ENCODE measurements at regions of chr5 and their contacts with region 1.

Region 1: DNA sequence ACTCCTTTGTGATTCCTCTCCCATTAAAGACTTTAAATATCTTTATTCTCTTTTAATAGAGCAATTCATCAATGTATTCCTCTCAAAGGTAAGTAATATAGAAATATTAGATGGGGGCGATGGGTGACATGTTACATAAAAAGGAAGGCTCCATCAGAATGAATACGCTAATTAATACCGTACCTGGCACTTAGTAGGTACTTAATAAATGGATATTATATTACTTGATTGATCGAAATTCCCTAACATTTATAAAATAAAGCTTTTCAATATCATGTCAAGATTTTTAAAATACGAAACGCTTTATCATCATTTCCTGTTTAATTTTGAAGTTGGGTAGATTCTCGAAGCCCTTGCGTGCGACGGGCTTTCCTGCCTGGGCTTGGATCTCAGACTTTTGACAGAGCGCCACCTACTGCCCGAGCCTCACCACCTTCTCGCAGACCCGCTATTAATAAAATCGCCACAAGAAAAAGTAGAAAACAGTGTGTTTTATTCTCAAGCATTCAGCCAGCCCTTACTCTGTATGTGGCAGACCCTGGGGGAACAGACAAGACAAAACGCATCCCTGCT is 99.4 kb downstream of the C5orf15 start:
- DNase-seq: peak; percentile 77
- H3K4me3 ChIP-seq: no peak overlapping the region
- H3K27ac ChIP-seq: no peak overlapping the region
- H3K4me1 ChIP-seq: peaks cover 16 to 28% of the 10 kb centered on the region in 2 experiments; a peak in 3 of 4 replicates
- H3K27me3 ChIP-seq: peaks cover 10% of the 10 kb centered on the region; the same call in 1 of the 2 replicates
- CTCF ChIP-seq: peak; percentile 83
- EP300 ChIP-seq: no peak
- RAD21 ChIP-seq: peak; percentile 90

Region 2: DNA sequence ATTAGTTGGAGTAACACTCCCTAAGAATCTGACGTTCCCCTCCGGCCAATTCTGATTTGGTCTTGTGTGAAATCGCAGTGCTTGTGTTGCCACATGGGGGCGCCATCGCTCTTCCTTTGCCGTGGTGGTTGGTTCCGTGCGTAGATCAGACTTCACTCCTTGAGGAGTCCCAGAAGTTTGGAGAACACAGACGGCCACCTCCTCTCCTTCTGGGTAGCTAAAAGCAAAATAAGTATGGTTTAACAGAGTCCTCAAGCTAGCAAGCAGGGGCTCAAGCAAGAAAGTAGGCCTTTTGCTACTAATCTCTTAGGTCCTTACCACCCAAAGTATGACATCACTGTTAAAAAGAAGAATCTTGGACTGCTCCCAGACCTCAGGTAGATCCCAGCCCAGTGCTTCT is 757.7 kb before region 1 on chr5:
- CTCF ChIA-PET with region 1: interaction called, 10 read pairs
- POLR2A ChIA-PET with region 1: no interaction called
- DNase-seq: peak; percentile 79
- H3K4me3 ChIP-seq: no peak overlapping the region; a peak in 1 of 4 replicates
- H3K27ac ChIP-seq: no peak overlapping the region
- H3K4me1 ChIP-seq: peaks cover 0 to 24% of the 10 kb centered on the region in 2 experiments; a peak in 1 of 4 replicates
- H3K27me3 ChIP-seq: no peaks in the 10 kb centered on the region
- CTCF ChIP-seq: peak; percentile 97
- EP300 ChIP-seq: no peak
- RAD21 ChIP-seq: peak; percentile 99

Region 3: GRCh38 chr5:133605323-133605722 is 263.7 kb before region 1 on chr5:
- CTCF ChIA-PET with region 1: interaction called, 10 read pairs
- POLR2A ChIA-PET with region 1: no interaction called
- DNase-seq: peak; percentile 80
- H3K4me3 ChIP-seq: no peak overlapping the region
- H3K27ac ChIP-seq: peak overlapping the region in 1 of 2 experiments; percentile 68; a peak in 2 of 4 replicates
- H3K4me1 ChIP-seq: peaks cover 0 to 22% of the 10 kb centered on the region in 2 experiments; a peak in 2 of 4 replicates
- H3K27me3 ChIP-seq: peaks cover 4% of the 10 kb centered on the region; the same call in 1 of the 2 replicates
- CTCF ChIP-seq: no peak
- EP300 ChIP-seq: peak in 1 of 2 experiments; percentile 86; a peak in 2 of 4 replicates
- RAD21 ChIP-seq: no peak

Region 4: GRCh38 chr5:133709209-133709725 is 159.8 kb before region 1 on chr5:
- CTCF ChIA-PET with region 1: interaction called, 34 read pairs
- POLR2A ChIA-PET with region 1: interaction called, 4 read pairs
- DNase-seq: no peak
- H3K4me3 ChIP-seq: no peak overlapping the region
- H3K27ac ChIP-seq: peak overlapping the region in 1 of 2 experiments; percentile 93; a peak in 2 of 4 replicates
- H3K4me1 ChIP-seq: peaks cover 0 to 71% of the 10 kb centered on the region in 2 experiments; a peak in 2 of 4 replicates
- H3K27me3 ChIP-seq: no peaks in the 10 kb centered on the region
- CTCF ChIP-seq: no peak
- EP300 ChIP-seq: no peak
- RAD21 ChIP-seq: no peak

Region 5: DNA sequence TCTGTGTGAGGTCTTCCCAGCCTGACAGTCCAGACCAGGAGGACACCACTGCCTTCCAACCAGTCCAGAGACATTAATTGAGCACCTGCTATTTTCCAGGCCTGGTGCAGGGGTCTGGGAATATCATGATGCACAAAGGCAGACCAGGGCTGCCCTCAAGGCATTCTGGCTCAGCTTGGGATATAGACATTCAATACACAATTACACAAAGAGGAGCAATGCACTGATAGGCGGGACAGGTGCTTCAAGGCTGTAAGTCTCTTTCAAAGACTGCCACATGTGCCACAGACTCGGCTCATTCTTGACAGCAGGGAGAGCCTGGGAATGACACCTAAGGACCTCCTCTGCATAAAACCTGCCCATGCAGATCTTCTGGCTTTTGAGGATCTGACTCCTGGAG is 59.2 kb before region 1 on chr5:
- CTCF ChIA-PET with region 1: interaction called, 11 read pairs
- POLR2A ChIA-PET with region 1: no interaction called
- DNase-seq: no peak
- H3K4me3 ChIP-seq: no peak overlapping the region
- H3K27ac ChIP-seq: no peak overlapping the region
- H3K4me1 ChIP-seq: no peaks in the 10 kb centered on the region; a peak in 1 of 4 replicates
- H3K27me3 ChIP-seq: peaks cover 5% of the 10 kb centered on the region; the same call in 1 of the 2 replicates
- CTCF ChIP-seq: no peak
- EP300 ChIP-seq: no peak
- RAD21 ChIP-seq: no peak

Region 6: GRCh38 chr5:133884569-133885311 is 15.7 kb after region 1 on chr5:
- CTCF ChIA-PET with region 1: interaction called, 81 read pairs
- POLR2A ChIA-PET with region 1: no interaction called
- DNase-seq: no peak
- H3K4me3 ChIP-seq: no peak overlapping the region
- H3K27ac ChIP-seq: no peak overlapping the region
- H3K4me1 ChIP-seq: peaks cover 11 to 28% of the 10 kb centered on the region in 2 experiments; a peak in 2 of 4 replicates
- H3K27me3 ChIP-seq: no peaks in the 10 kb centered on the region; the same call in 1 of the 2 replicates
- CTCF ChIP-seq: no peak
- EP300 ChIP-seq: no peak
- RAD21 ChIP-seq: no peak

Region 7: DNA sequence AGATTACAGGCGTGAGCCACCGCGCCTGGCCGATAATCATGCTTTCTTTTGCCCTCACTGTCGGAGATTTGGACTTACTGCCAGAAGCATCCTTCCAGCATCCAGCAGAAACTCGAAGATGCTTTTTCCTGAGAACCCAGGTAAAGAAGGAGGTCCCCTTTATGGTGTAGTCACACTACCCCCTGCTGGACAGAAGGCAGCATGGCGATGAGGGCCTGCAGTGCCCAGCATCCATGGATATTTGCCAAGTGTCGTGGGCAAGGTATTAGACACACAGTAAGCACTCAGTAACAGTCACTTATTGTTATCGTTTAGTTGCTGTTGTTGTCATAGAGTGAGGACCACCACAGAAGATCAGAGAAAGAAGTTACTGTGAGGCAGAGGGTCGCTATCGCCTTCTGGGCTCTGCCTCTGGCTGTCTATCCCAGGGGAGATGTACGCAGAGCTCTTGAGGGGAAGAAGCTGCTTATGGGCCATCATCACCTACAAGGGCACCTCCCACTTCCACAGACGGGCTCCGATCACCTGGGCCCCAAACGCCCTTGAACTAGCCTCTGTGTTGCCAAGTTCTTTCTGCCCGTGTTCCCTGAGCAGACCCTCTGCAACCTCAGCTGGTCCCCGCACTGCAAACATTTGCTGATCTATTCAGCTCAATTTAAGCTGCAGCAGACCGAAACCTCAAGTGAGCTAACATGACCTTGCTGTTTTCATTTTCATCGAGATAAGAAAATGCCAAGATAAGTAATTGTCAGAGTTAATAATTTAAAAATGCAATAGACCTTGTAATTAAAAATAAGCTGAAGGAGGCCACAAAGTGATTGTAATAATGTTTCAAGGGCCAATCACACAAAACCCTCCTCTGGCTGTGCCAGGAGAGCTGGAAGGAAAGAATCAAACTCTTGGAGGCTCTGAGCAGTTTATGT is 75.5 kb after region 1 on chr5:
- CTCF ChIA-PET with region 1: interaction called, 12 read pairs
- POLR2A ChIA-PET with region 1: no interaction called
- DNase-seq: peak; percentile 81
- H3K4me3 ChIP-seq: peak overlapping the region in 1 of 2 experiments; percentile 40; a peak in 1 of 4 replicates
- H3K27ac ChIP-seq: no peak overlapping the region
- H3K4me1 ChIP-seq: no peaks in the 10 kb centered on the region
- H3K27me3 ChIP-seq: no peaks in the 10 kb centered on the region
- CTCF ChIP-seq: peak; percentile 77
- EP300 ChIP-seq: no peak
- RAD21 ChIP-seq: peak; percentile 96